Aorta (tissue), 5 donors: ENCODE measurements at regions of chr19 and their contacts with region 1.

Region 1: GRCh38 chr19:32405431-32406161 is at the start of gene DPY19L3:
- DNase-seq: peak; percentile 97 to 98
- ATAC-seq: peak; percentile 98
- H3K4me3 ChIP-seq: peak within 1 kb of the TSS; percentile 92 to 94
- H3K27ac ChIP-seq: peak within 1 kb of the TSS; percentile 83 to 93
- H3K4me1 ChIP-seq: peaks cover 0 to 2% of the 10 kb centered on the region in 2 donors
- H3K27me3 ChIP-seq: no peaks in the 10 kb centered on the region
- total RNA-seq, gene DPY19L3: 33.5 to 47.6 TPM

Region 2: GRCh38 chr19:32339988-32340874 is 65.4 kb before region 1 on chr19:
- intact Hi-C with region 1: loop called in 1 of 2 experiments (anchors 5 kb)
- DNase-seq: peak; percentile 75 to 92
- ATAC-seq: peak; percentile 83
- H3K4me3 ChIP-seq: no peak overlapping the region
- H3K27ac ChIP-seq: peak overlapping the region in 1 of 2 donors; percentile 2
- H3K4me1 ChIP-seq: no peaks in the 10 kb centered on the region
- H3K27me3 ChIP-seq: no peaks in the 10 kb centered on the region

Region 3: DNA sequence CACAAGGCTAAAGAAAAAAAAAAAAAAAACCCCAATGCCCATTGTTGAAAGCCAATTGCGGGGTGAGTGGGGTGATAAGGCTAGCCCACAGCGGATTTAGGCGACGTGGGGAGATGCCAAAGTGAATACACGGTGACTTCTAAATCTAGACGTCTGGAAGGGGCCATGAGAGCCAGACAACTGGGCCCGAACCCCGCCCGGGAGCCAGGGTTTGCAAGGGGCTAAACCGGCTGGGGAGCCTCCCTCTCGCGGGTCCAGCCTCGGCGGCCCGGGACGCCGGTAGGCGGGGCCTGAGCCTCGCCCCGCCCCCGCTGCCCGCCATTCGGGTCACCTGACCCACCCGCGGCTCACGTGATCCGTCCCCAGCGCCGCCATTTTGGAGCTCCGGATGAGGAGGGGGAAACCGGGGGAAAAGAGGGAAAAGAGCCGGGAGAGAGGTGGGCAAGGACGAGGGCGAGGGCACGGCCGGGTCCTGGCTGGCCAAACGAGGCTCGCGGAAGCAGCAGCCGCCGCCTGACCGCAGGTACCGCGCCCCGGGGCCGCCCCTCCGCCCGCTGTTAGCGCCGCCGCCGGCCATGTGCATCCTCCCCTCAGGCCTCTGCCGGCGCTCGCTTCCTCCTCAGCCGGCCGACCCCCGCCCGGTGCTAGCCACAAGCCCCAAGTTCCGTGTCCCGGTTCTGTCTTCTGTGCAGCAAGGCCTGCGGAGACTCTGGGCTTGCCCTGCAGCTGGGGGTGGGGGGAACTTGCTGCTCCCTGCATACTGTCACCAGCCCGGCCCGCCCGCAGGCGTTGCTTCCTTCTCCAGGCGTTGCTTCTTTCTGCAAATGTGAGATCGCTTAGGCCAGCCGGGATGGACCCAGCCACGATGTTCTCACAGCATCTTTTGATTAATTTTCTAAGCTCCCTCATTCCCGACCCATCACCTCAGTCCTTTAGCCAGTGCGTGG is 60.1 kb before region 1 on chr19 and contains the start of gene ZNF507:
- intact Hi-C with region 1: loop called (anchors 5 kb)
- DNase-seq: peak; percentile 85 to 95
- ATAC-seq: peak; percentile 96
- H3K4me3 ChIP-seq: peak within 1 kb of the TSS; percentile 76 to 100
- H3K27ac ChIP-seq: peak within 1 kb of the TSS; percentile 37 to 47
- H3K4me1 ChIP-seq: peaks cover 0 to 5% of the 10 kb centered on the region in 2 donors
- H3K27me3 ChIP-seq: no peaks in the 10 kb centered on the region
- total RNA-seq, gene ZNF507: 23.2 to 25.1 TPM

Region 4: DNA sequence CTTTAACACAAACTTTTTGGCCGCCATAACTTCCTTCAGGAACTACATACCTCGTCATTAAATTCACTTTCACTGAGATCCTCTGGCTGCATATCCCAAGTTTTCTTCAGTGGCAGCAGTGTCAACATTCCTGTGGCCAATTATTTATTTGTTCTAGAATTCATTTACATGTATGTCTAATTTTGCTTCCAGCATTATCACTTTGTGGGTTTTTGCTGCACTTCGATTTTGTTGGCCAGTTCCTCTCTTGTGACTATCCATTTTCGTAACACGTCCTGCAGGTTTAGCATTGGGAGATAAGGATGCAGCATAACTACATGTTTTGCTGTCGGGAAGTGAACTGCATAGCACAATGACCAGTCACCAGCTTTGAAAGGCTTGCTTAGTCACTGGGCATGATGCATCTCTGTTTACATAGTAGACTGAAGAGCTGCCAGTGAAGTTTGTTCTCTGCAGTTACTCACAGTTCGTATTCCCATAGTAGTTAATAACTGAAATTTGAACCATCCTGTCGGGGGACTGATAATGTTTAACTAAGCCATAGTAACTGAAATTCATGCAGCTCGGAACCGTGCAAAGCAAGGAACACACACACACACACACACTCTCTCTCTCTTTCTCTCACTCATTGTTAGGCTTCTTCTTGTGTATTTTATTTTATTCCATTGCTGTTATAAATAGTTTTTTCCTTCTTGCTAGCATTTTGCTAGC is 31.9 kb before region 1 on chr19:
- intact Hi-C with region 1: loop called in 1 of 2 experiments (anchors 5 kb)
- DNase-seq: no peak
- ATAC-seq: peak; percentile 85
- H3K4me3 ChIP-seq: peak overlapping the region in 1 of 2 donors; percentile 31
- H3K27ac ChIP-seq: peak overlapping the region in 1 of 2 donors; percentile 48
- H3K4me1 ChIP-seq: no peaks in the 10 kb centered on the region
- H3K27me3 ChIP-seq: no peaks in the 10 kb centered on the region

Region 5: GRCh38 chr19:32580901-32581703 is 175.5 kb after region 1 on chr19 and contains the start of gene PDCD5:
- intact Hi-C with region 1: loop called in 1 of 2 experiments (anchors 10 kb)
- DNase-seq: peak; percentile 98 to 99
- ATAC-seq: peak; percentile 99
- H3K4me3 ChIP-seq: peak within 1 kb of the TSS; percentile 64
- H3K27ac ChIP-seq: peak within 1 kb of the TSS in 1 of 2 donors; percentile 26
- H3K4me1 ChIP-seq: peaks cover 0 to 10% of the 10 kb centered on the region in 2 donors
- H3K27me3 ChIP-seq: no peaks in the 10 kb centered on the region
- total RNA-seq, gene PDCD5: 71.2 to 76.8 TPM

Region 6: DNA sequence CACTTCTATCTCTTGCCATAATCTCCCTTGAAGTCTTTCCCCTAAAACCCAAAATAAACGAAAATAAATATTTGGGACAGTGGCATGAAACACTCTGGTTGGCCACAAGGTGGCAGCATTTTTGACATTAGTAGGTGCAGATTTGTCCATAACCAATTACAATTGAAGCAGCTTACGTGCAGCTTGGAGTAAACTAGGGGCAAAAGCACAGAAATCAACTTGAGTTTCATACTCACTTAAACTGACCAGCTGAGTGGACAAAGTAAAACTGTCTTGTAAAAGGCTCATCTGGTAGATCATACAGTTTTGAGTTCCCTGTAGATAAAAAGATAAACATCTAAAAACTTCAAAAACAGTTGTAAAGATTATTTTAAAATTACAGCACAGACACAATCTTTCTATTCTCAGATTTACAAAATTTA is 194.2 kb after region 1 on chr19:
- intact Hi-C with region 1: no loop called
- DNase-seq: no peak
- ATAC-seq: no peak
- H3K4me3 ChIP-seq: no peak overlapping the region
- H3K27ac ChIP-seq: no peak overlapping the region
- H3K4me1 ChIP-seq: no peaks in the 10 kb centered on the region
- H3K27me3 ChIP-seq: no peaks in the 10 kb centered on the region